ENCODE measurements at regions of chr14 and their contacts with region 1.

Region 1: DNA sequence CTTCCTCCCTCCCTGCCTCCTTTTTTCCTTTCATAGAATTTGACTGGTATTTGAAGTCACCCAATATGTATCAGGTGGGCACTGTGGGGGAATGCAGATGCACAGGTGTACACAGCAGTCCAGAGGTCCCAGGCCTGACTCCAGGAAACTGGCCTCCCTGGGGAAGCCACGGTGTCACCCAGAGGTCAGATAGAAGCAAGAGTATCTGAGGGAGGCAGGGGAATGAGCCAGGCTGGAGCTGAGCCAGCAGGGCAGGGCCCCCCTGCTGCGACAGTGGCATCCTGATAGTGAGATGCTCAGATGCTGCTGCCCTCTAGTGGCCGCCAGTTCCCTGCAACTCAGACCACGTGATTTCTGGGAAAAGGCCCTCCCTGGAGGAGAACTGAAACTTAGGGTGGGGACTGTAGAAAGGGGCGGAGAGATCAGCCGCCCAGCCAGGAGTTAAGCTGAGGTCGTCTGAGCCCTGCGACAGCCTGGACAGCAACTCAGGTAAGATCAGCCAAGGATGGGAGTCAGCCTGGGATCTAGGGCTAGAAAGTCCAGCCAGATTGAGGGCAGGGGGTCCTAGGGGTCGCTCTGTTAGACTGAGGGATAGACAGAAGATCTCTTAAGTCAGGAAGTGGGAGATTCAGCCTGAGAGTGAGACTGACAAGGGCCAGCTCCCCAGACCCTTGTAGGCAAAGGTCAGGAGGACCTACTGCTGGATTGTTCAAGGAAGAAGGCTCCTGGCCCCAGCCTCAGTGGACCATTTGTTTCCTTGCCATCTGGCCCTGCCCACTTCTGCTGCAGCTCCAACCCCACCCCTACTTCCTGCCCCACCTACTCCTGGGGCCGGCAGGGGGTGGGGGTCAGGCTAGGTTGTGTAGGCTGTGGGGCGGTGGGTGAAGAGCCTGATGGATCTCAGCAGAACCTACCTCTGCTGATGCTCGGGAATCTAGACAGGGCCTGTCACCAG is at the start of gene IRF9:
- DNase-seq: peak; percentile 94
- CTCF ChIP-seq: peak; percentile 92

Region 2: GRCh38 chr14:24108336-24108874 is 52.7 kb before region 1 on chr14:
- CTCF ChIA-PET with region 1: interaction called, 30 read pairs
- POLR2A ChIA-PET with region 1: interaction called, 14 read pairs
- DNase-seq: no peak
- CTCF ChIP-seq: no peak

Region 3: DNA sequence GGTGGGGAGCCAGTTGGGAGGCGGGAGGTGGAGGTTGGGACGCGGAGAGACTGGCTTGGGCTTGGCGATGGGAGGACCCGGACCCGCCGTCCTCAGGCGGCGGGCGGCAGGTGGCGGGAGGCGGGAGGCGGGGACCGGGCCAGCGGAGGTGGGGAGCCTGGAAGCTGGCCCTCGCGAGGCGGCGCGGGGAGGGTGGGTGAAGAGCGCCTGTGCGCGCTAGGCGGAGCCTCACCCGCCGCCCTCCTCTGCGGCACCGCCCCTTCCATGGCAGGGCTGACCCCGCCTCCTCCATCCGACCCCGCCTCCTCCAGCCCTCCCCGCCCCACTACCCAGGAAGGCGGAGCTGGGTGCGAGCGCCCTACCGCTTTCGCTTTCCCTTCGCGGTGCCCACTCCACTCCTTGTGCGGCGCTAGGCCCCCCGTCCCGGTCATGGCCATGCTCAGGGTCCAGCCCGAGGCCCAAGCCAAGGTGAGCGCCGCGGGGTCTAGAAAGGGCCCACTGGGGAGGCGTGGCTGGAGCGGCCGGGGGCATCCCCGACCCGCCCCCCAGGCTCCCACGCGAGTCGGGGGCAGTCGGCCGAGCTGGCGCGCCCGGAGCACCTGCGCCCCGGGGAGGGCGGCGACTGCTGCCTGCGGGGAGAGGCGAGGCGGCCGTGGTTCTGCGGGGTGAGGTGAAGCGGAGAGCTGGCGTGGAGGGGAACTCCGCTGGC is 25.1 kb before region 1 on chr14 and contains the start of gene PSME1:
- CTCF ChIA-PET with region 1: interaction called, 37 read pairs
- POLR2A ChIA-PET with region 1: interaction called, 5 read pairs
- DNase-seq: peak; percentile 97
- CTCF ChIP-seq: no peak

Region 4: GRCh38 chr14:24171422-24172260 is 10.5 kb after region 1 on chr14 and contains the start of gene REC8:
- CTCF ChIA-PET with region 1: interaction called, 38 read pairs
- POLR2A ChIA-PET with region 1: interaction called, 5 read pairs
- DNase-seq: peak; percentile 91
- CTCF ChIP-seq: no peak

Region 5: DNA sequence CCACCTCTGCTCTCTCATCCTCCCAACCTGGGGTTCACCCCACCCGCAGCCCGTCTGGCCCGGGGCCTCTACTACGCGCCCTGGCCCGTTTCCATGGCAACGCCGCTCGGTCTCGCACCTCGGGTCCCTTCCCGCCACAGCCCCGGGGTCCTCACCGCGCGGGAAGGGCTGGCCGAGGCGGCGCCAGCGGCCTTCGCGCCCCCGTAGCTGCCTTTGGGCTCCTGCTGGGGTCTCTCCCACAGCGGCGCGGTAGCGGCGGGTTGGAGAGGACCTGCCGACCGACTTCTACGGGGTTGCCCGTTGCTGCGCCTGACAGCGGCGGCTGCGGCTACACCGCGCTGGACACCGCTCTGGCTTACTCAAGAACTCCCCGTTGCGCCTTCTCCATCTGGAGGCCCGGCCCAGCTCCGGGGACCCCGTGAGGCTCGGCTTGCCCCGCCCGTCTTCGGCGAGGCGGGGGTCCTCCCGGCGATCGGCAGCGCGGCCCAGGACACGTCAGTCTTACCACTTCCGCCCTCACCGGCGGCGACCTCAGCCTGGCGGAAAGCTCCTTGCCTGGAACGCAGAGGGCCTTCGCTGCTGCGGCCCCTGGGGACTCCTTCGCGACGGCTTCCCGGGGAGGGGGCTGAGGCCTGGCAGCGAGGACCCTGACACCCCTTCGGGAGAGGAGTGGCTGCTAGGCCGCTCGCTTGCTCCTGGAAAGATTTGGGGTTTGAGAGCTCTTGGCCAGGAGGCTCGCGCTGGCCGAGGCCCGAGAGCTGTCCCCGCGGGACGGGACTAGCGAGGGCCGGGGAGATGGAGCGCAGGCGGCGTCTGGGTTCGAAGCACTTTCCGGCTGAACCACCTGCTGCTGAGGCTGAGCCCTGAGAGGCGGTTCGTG is 34.3 kb after region 1 on chr14 and contains the start of gene TM9SF1:
- CTCF ChIA-PET with region 1: interaction called, 15 read pairs
- POLR2A ChIA-PET with region 1: no interaction called
- DNase-seq: peak; percentile 94
- CTCF ChIP-seq: no peak

Region 6: GRCh38 chr14:24299255-24300195 is 138.4 kb after region 1 on chr14 and contains the starts of genes DHRS1 and NOP9:
- CTCF ChIA-PET with region 1: interaction called, 10 read pairs
- POLR2A ChIA-PET with region 1: interaction called, 3 read pairs
- DNase-seq: peak; percentile 96
- CTCF ChIP-seq: no peak

Measured in GM10248 (cell line).